Activated CD4-positive, alpha-beta T cell treated with anti-CD3 and anti-CD28 coated beads, Interleukin-2, amount 10 ng/mL, durations not matched to agents 24 days and 14 days (primary cell): ENCODE measurements at regions of chr9 and their contacts with region 1.

Region 1: GRCh38 chr9:20941174-20941690 is 90.2 kb downstream of the HACD4 start:
- DNase-seq: peak; percentile 88
- H3K4me3 Mint-ChIP-seq: no peak overlapping the region
- H3K27ac Mint-ChIP-seq: no peak overlapping the region
- H3K4me1 Mint-ChIP-seq: peaks cover 3% of the 10 kb centered on the region
- H3K27me3 Mint-ChIP-seq: no peaks in the 10 kb centered on the region

Region 2: GRCh38 chr9:19493174-19493811 is 1447.9 kb before region 1 on chr9:
- intact Hi-C with region 1: loop called (anchors 5 kb)
- DNase-seq: peak; percentile 84
- H3K4me3 Mint-ChIP-seq: peak overlapping the region; percentile 9
- H3K27ac Mint-ChIP-seq: no peak overlapping the region
- H3K4me1 Mint-ChIP-seq: peaks cover 10% of the 10 kb centered on the region
- H3K27me3 Mint-ChIP-seq: peaks cover 3% of the 10 kb centered on the region

Region 3: DNA sequence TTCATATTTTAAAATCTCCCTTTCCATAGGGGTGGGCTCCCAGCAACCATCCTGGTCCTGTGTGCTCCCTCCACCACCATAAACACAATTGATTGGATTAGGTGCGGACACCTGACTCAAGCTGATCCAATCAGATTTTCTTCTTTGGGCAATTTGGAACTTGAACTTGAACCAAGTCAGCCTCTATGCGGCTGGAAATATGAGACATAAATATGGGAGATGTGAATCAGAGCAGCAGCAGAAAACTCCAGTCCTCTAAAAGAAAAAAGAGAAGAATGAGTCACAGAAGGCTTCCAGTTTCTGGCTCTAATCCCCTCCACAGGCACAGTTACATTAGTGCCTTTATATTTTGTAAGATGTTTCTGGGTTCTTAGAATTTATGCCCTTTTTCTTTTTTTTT is 625.6 kb before region 1 on chr9:
- intact Hi-C with region 1: no loop called
- DNase-seq: peak; percentile 64
- H3K4me3 Mint-ChIP-seq: peak overlapping the region; percentile 53
- H3K27ac Mint-ChIP-seq: peak overlapping the region; percentile 95
- H3K4me1 Mint-ChIP-seq: peaks cover 62% of the 10 kb centered on the region
- H3K27me3 Mint-ChIP-seq: no peaks in the 10 kb centered on the region

Region 4: DNA sequence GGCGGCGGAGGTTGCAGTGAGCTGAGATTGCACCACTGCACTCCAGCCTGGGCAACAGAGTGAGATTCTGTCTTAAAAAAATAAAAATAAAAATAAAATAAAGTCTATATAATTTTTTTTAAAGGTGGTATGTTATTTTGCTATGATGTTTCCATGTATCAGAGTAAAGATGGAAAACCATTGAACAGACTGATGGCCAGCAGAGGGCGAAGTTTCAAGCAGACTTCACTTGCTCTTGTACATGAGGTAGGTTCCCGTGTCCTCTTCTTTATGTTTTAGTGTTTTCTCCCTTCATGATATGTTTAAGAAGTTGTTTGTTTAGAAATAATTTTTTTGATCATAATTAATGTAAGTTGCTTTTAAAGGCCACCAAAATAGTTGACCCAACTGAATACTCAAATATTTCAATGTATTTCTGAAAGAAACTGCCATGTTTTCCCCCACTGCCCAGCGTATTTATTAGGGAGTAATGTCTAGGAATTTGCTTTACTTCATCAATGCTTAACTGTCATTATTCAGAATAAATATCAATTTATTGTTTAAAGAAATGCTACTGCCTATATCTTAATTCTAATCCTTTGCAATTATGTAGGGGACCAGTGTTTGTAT is 56.1 kb before region 1 on chr9:
- intact Hi-C with region 1: loop called (anchors 1 kb)
- DNase-seq: peak; percentile 85
- H3K4me3 Mint-ChIP-seq: no peak overlapping the region
- H3K27ac Mint-ChIP-seq: no peak overlapping the region
- H3K4me1 Mint-ChIP-seq: peaks cover 1% of the 10 kb centered on the region
- H3K27me3 Mint-ChIP-seq: no peaks in the 10 kb centered on the region

Region 5: DNA sequence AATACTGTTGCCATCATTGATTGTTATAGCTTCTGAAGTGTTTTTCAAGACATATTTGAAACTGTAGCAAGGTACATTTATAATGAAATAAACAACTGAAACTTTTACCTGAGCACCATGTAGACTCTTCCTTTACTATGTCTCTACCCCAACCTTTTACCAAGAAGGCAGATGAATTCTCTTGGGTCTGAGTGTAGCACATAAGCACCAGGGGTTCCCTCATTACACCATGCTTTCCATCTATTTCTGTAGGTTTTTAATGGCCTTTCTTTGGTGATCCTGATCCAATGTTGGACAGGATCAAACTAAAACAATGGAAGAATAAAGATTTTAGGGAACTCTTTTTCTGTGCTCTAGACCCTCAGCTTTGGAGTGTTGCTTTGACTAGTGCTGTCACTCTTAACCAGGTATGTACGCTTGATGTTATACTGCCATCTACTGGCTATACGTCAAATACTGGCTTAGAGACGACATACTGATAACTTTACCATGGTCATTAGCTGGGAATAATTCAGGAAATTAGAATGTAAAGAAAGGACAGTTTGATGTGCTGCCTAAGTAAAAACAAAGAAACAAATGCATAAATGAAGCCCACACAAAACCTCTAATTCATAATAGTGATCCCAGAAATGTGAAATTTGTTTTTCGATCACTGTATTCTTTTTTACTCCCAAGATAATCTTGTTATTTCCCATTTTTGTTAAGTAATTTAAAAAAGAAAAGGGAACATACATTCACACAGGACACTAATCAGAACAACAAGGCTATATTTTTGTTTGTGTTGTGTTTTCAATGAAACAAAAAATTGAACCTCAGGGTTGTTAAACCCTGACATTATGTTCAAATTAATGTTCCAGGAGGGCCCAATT is 169.7 kb after region 1 on chr9:
- intact Hi-C with region 1: loop called (anchors 2 kb)
- DNase-seq: peak; percentile 81
- H3K4me3 Mint-ChIP-seq: no peak overlapping the region
- H3K27ac Mint-ChIP-seq: no peak overlapping the region
- H3K4me1 Mint-ChIP-seq: no peaks in the 10 kb centered on the region
- H3K27me3 Mint-ChIP-seq: peaks cover 24% of the 10 kb centered on the region